ENCODE measurements at regions of chr16 and their contacts with region 1.

Region 1: DNA sequence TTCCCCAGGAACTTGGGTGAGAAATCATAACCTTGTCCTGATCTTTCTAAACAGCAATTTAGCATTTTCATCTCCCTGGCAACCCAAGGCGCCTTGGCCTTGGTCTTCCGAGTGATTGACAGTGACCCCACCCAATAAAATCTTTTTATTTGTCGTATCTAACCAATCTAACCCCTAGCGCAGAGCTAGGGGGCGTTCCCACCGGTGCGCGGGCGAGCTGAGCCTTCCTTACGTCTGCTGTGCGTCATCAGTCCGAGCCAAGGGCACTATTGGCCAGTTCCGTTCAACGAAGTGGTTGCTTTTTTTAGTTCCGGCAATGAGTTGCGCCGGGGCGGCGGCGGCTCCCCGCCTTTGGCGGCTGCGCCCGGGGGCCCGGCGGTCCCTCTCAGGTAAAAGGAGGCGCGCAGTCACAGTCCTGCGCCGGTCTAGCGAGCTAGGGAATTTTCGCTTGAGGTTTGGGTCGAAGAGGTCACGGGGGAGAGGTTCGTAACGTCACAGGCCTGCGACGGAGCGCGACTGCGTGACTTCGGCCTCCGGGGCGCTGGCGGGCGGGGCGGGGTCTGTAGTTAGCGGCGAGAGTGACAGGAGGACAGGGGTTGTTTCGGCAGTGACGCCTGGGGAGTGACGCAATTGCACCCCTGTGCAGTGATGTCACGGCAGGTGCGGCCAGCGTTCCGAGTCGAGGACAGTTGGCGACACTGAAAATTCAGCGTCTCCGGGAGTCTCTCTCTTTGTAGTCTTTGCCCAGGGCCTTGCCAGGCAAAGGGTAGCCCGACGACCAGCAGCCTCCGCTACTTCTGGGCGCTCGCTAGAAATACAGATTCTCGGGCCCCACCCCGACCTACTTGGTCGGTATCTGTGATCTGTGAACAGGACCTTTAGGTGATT is at the start of gene COQ7:
- DNase-seq: peak; percentile 95 to 100 (median 98)
- ATAC-seq: peak; percentile 85
- H3K4me3 ChIP-seq: peak within 1 kb of the TSS; percentile 76 to 85
- H3K4me3 Mint-ChIP-seq: peak within 1 kb of the TSS; percentile 92
- H3K27ac ChIP-seq: peak within 1 kb of the TSS; percentile 100
- H3K27ac Mint-ChIP-seq: peak within 1 kb of the TSS; percentile 100
- H3K4me1 ChIP-seq: peaks cover 11% of the 10 kb centered on the region
- H3K4me1 Mint-ChIP-seq: peaks cover 23% of the 10 kb centered on the region
- H3K27me3 ChIP-seq: no peaks in the 10 kb centered on the region
- H3K27me3 Mint-ChIP-seq: no peaks in the 10 kb centered on the region
- CTCF ChIP-seq: no peak
- total RNA-seq, gene COQ7: 10.9 to 11.7 TPM

Region 2: GRCh38 chr16:17369421-17370222 is 1698.0 kb before region 1 on chr16:
- CTCF ChIA-PET with region 1: no interaction called
- POLR2A ChIA-PET with region 1: no interaction called
- intact Hi-C with region 1: loop called in 1 of 2 experiments (anchors 10 kb)
- DNase-seq: peak; percentile 60 to 94 (median 81)
- ATAC-seq: peak; percentile 82
- H3K4me3 ChIP-seq: peak overlapping the region; percentile 28 to 49
- H3K4me3 Mint-ChIP-seq: peak overlapping the region; percentile 82
- H3K27ac ChIP-seq: peak overlapping the region; percentile 78 to 84
- H3K27ac Mint-ChIP-seq: peak overlapping the region; percentile 97
- H3K4me1 ChIP-seq: peaks cover 73% of the 10 kb centered on the region
- H3K4me1 Mint-ChIP-seq: peaks cover 89% of the 10 kb centered on the region
- H3K27me3 ChIP-seq: no peaks in the 10 kb centered on the region
- H3K27me3 Mint-ChIP-seq: no peaks in the 10 kb centered on the region
- CTCF ChIP-seq: no peak

Region 3: GRCh38 chr16:18789850-18790724 is 277.5 kb before region 1 on chr16 and contains the start of gene RPS15A:
- CTCF ChIA-PET with region 1: no interaction called
- POLR2A ChIA-PET with region 1: interaction called, 3 read pairs
- intact Hi-C with region 1: loop called in 1 of 2 experiments (anchors 1 kb)
- DNase-seq: peak; percentile 81 to 99 (median 91)
- ATAC-seq: peak; percentile 96
- H3K4me3 ChIP-seq: peak within 1 kb of the TSS; percentile 98 to 100
- H3K4me3 Mint-ChIP-seq: peak within 1 kb of the TSS; percentile 95
- H3K27ac ChIP-seq: peak within 1 kb of the TSS; percentile 76 to 88
- H3K27ac Mint-ChIP-seq: peak within 1 kb of the TSS; percentile 88
- H3K4me1 ChIP-seq: peaks cover 39% of the 10 kb centered on the region
- H3K4me1 Mint-ChIP-seq: peaks cover 50% of the 10 kb centered on the region
- H3K27me3 ChIP-seq: no peaks in the 10 kb centered on the region
- H3K27me3 Mint-ChIP-seq: no peaks in the 10 kb centered on the region
- CTCF ChIP-seq: no peak
- total RNA-seq, gene RPS15A: 3,671 to 3,755 TPM

Region 4: DNA sequence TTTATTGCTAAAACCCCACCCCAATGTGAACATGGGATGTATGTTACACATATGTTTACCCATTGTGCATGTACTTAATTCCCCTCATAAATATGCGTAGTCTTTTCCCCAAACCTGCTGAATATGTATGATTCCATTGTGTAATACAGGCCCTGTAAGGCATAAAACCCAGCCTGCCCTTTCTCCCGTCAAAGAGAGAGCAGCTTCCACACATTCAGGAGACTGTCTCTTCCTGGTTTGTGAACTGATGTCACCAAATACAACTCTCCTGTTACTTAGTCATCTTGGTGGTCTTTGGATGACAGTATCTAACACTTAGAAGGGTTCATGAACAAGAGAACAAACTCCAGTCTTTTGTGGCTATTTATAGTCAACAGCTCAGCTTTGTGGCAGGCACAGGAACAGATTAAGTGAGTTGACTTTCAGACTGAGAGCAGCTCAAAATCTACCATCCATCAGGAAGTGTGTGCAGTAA is 108.5 kb before region 1 on chr16:
- CTCF ChIA-PET with region 1: no interaction called
- POLR2A ChIA-PET with region 1: no interaction called
- intact Hi-C with region 1: no loop called
- DNase-seq: no peak
- ATAC-seq: no peak
- H3K4me3 ChIP-seq: no peak overlapping the region
- H3K4me3 Mint-ChIP-seq: no peak overlapping the region
- H3K27ac ChIP-seq: no peak overlapping the region
- H3K27ac Mint-ChIP-seq: no peak overlapping the region
- H3K4me1 ChIP-seq: peaks cover 5% of the 10 kb centered on the region
- H3K4me1 Mint-ChIP-seq: peaks cover 7% of the 10 kb centered on the region
- H3K27me3 ChIP-seq: no peaks in the 10 kb centered on the region
- H3K27me3 Mint-ChIP-seq: no peaks in the 10 kb centered on the region
- CTCF ChIP-seq: no peak

Region 5: DNA sequence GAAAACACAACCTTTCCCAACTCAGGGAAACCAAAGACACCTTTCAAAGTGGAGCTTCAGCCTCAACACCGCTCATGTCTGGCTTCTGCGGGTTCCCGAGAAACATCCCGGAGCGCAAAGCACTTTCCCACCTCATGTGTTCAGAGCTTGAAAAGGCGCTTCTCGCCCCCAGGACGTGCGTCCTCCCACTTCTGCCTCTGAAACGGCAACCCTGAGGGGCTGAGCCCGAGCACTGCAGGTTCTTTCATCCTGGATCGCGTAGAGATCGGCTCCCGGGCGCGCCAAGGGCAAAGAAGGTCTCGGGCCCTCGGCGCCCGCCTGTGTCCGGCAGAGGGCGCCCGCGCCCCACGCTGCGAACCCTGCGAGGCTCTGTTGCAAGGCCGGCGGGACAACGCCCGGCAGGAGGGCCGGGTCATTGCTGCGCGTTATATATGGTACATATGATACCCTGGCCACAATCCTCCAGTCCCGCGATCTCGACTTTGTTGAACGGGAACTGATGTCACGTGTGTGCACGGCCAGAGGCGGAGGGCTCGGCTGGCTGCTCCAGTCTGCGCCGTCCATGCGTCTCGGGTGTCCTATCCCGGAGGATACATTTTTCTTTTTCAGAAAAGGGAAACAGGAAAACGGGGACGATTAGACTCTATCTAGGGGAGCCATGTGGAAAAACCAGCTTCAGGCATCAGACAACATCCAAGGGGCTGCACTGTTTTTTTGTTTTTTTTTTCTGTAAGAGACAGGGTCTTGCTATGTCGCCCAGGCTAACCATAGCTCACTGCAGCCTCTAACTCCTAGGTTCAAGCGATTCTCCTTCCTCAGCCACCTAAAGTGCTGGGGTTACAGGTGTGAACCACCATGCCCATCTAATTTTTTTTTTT is 19.0 kb after region 1 on chr16:
- CTCF ChIA-PET with region 1: interaction called, 11 read pairs
- POLR2A ChIA-PET with region 1: interaction called, 8 read pairs
- intact Hi-C with region 1: loop called in 1 of 2 experiments (anchors 1 kb)
- DNase-seq: peak; percentile 53 to 87 (median 72)
- ATAC-seq: peak; percentile 91
- H3K4me3 ChIP-seq: peak overlapping the region; percentile 25 to 40
- H3K4me3 Mint-ChIP-seq: peak overlapping the region; percentile 63
- H3K27ac ChIP-seq: no peak overlapping the region
- H3K27ac Mint-ChIP-seq: no peak overlapping the region
- H3K4me1 ChIP-seq: peaks cover 3% of the 10 kb centered on the region
- H3K4me1 Mint-ChIP-seq: peaks cover 3% of the 10 kb centered on the region
- H3K27me3 ChIP-seq: peaks cover 0 to 4% of the 10 kb centered on the region in 2 experiments
- H3K27me3 Mint-ChIP-seq: peaks cover 2% of the 10 kb centered on the region
- CTCF ChIP-seq: peak; percentile 98

Region 6: DNA sequence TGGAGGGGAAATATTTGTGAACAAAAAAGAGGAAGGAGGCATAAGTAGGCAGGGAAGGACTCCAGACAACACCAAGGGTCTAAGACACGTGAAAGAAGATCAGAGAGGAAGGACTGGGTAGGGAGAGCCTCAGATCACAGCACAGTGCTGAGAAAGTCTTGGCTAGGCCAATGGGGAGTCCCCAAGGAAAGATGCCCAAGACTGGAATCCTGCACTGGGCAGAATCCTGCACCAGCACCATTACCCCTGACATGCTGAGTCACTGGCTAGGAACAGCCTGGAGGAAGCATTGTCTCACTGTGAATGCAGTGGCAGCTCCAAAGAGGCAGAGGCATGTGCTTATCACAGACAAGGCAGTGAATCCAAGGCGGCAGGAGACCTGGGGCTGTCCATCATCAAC is 237.2 kb after region 1 on chr16:
- CTCF ChIA-PET with region 1: no interaction called
- POLR2A ChIA-PET with region 1: no interaction called
- intact Hi-C with region 1: no loop called
- DNase-seq: no peak
- ATAC-seq: no peak
- H3K4me3 ChIP-seq: no peak overlapping the region
- H3K4me3 Mint-ChIP-seq: no peak overlapping the region
- H3K27ac ChIP-seq: no peak overlapping the region
- H3K27ac Mint-ChIP-seq: no peak overlapping the region
- H3K4me1 ChIP-seq: no peaks in the 10 kb centered on the region
- H3K4me1 Mint-ChIP-seq: no peaks in the 10 kb centered on the region
- H3K27me3 ChIP-seq: no peaks in the 10 kb centered on the region
- H3K27me3 Mint-ChIP-seq: peaks cover 11% of the 10 kb centered on the region
- CTCF ChIP-seq: no peak

Region 7: GRCh38 chr16:19555162-19555937 is 487.8 kb after region 1 on chr16 and contains the start of gene VPS35L:
- CTCF ChIA-PET with region 1: interaction called, 3 read pairs
- POLR2A ChIA-PET with region 1: interaction called, 6 read pairs
- intact Hi-C with region 1: loop called (anchors 1 kb)
- DNase-seq: peak; percentile 91 to 99 (median 97)
- ATAC-seq: peak; percentile 95
- H3K4me3 ChIP-seq: peak within 1 kb of the TSS; percentile 67 to 73
- H3K4me3 Mint-ChIP-seq: peak within 1 kb of the TSS; percentile 97
- H3K27ac ChIP-seq: peak within 1 kb of the TSS; percentile 66 to 81
- H3K27ac Mint-ChIP-seq: peak within 1 kb of the TSS; percentile 96
- H3K4me1 ChIP-seq: peaks cover 10% of the 10 kb centered on the region
- H3K4me1 Mint-ChIP-seq: peaks cover 28% of the 10 kb centered on the region
- H3K27me3 ChIP-seq: no peaks in the 10 kb centered on the region
- H3K27me3 Mint-ChIP-seq: no peaks in the 10 kb centered on the region
- CTCF ChIP-seq: peak; percentile 79
- total RNA-seq, gene VPS35L: 26.5 to 27.3 TPM

Region 8: GRCh38 chr16:19886073-19886941 is 818.7 kb after region 1 on chr16:
- CTCF ChIA-PET with region 1: no interaction called
- POLR2A ChIA-PET with region 1: no interaction called
- intact Hi-C with region 1: loop called in 1 of 2 experiments (anchors 5 kb)
- DNase-seq: peak; percentile 64 to 85 (median 79)
- ATAC-seq: peak; percentile 65
- H3K4me3 ChIP-seq: peak overlapping the region in 1 of 2 experiments; percentile 72
- H3K4me3 Mint-ChIP-seq: peak overlapping the region; percentile 84
- H3K27ac ChIP-seq: no peak overlapping the region
- H3K27ac Mint-ChIP-seq: no peak overlapping the region
- H3K4me1 ChIP-seq: peaks cover 31% of the 10 kb centered on the region
- H3K4me1 Mint-ChIP-seq: peaks cover 24% of the 10 kb centered on the region
- H3K27me3 ChIP-seq: peaks cover 17 to 29% of the 10 kb centered on the region in 2 experiments
- H3K27me3 Mint-ChIP-seq: peaks cover 36% of the 10 kb centered on the region
- CTCF ChIP-seq: peak; percentile 97